ENCODE measurements at regions of chr15 and their contacts with region 1.

Region 1: DNA sequence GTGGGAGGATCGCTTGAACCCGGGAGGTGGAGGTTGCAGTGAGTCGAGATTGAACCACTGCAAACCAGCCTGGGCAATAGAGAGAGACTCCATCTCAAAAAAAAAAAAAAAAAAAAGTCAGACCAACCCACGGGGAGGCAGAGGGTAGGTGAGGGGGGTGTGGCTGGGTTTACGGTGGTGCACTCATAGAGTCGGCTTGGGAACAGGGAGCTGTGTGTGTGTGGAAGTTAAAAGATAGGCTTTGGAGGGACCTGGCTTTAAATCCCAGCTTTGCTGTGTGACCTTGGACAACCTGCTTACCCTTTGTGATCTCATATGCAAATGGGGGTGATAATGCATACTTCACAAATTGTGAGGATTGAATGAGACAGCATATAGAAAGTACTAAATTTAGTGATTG is 10.0 kb upstream of the ISLR2 start:
- DNase-seq: no peak
- ATAC-seq: no peak
- H3K4me3 ChIP-seq: no peak overlapping the region
- H3K4me3 Mint-ChIP-seq: no peak overlapping the region
- H3K27ac ChIP-seq: no peak overlapping the region
- H3K27ac Mint-ChIP-seq: no peak overlapping the region
- H3K4me1 ChIP-seq: peaks cover 0 to 5% of the 10 kb centered on the region in 2 experiments
- H3K4me1 Mint-ChIP-seq: peaks cover 0 to 7% (median 0%) of the 10 kb centered on the region in 3 donors
- H3K27me3 ChIP-seq: peaks cover 0 to 52% of the 10 kb centered on the region in 2 experiments
- H3K27me3 Mint-ChIP-seq: peaks cover 39 to 53% of the 10 kb centered on the region in 2 donors

Region 2: GRCh38 chr15:75502360-75502759 is 1381.9 kb after region 1 on chr15:
- CTCF ChIA-PET with region 1: interaction called in 1 of 2 experiments, 10 read pairs
- POLR2A ChIA-PET with region 1: no interaction called
- DNase-seq: no peak
- ATAC-seq: no peak
- H3K4me3 ChIP-seq: no peak overlapping the region
- H3K4me3 Mint-ChIP-seq: no peak overlapping the region
- H3K27ac ChIP-seq: no peak overlapping the region
- H3K27ac Mint-ChIP-seq: no peak overlapping the region
- H3K4me1 ChIP-seq: no peaks in the 10 kb centered on the region
- H3K4me1 Mint-ChIP-seq: no peaks in the 10 kb centered on the region
- H3K27me3 ChIP-seq: no peaks in the 10 kb centered on the region
- H3K27me3 Mint-ChIP-seq: no peaks in the 10 kb centered on the region

Measured in T-cell (primary cell).